ENCODE measurements at regions of chr6 and their contacts with region 1.

Region 1: GRCh38 chr6:111483736-111484632 is 966 bp upstream of the REV3L start:
- DNase-seq: peak; percentile 90
- H3K4me3 ChIP-seq: peak overlapping the region; percentile 90
- H3K27ac ChIP-seq: peak overlapping the region; percentile 91
- H3K4me1 ChIP-seq: peaks cover 46% of the 10 kb centered on the region
- CTCF ChIP-seq: no peak

Region 2: DNA sequence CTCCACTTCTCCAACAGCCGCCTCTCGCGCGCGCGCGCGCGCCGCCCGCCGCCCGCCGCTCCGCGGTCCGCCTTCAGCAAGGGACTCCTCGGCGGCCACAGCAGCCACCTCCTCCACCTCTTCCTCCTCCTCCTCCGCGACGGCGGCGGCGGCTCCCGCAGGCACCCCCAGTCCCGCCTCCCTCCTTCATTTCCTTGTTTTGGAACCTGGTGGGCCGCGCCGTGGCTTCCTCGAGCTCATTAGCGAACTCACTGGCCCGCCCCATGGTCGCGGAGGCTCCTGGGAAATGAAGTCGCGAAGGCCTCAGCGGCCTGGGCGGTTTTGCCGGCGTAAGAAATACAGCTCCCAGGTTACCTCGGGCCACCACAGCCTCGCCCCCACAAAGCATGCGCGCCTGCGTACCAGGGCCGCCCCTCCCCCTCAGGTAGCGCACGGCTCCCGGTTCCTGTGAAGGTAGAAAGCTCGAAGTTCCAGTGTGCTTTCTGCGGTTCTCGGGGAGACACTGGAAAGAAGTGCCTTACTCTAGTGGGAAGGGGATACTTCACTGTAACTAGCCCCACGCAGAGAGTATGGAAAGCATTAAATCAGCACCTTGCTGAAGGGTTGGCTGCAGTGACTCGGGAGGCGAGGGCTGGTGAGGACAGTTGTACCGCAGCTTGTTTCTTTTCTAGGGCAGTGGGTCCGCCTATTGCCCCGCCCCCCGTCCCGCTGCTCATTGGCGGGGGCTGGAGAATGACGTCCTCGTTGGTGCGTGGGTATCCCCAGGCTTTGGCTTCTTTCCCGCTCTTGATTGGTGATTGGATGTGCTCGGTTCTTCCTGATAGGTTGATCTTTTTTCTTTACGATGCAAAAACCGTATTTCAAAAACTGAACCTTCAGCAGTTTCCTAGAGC is 668.5 kb before region 1 on chr6 and contains the start of gene CDK19:
- CTCF ChIA-PET with region 1: no interaction called
- POLR2A ChIA-PET with region 1: no interaction called
- intact Hi-C with region 1: loop called (anchors 10 kb)
- DNase-seq: peak; percentile 99
- H3K4me3 ChIP-seq: peak within 1 kb of the TSS; percentile 78
- H3K27ac ChIP-seq: peak within 1 kb of the TSS; percentile 87
- H3K4me1 ChIP-seq: peaks cover 41% of the 10 kb centered on the region
- CTCF ChIP-seq: no peak
- total RNA-seq, gene CDK19: 15.4 and 16.3 TPM in 2 replicates

Region 3: GRCh38 chr6:111259089-111259831 is 224.7 kb before region 1 on chr6:
- CTCF ChIA-PET with region 1: interaction called, 28 read pairs
- POLR2A ChIA-PET with region 1: interaction called, 21 read pairs
- intact Hi-C with region 1: loop called (anchors 1 kb)
- DNase-seq: peak; percentile 100
- H3K4me3 ChIP-seq: peak overlapping the region; percentile 81
- H3K27ac ChIP-seq: peak overlapping the region; percentile 67
- H3K4me1 ChIP-seq: peaks cover 17% of the 10 kb centered on the region
- CTCF ChIP-seq: peak; percentile 92

Region 4: GRCh38 chr6:111418971-111419693 is 64.9 kb before region 1 on chr6:
- CTCF ChIA-PET with region 1: no interaction called
- POLR2A ChIA-PET with region 1: no interaction called
- intact Hi-C with region 1: no loop called
- DNase-seq: no peak
- H3K4me3 ChIP-seq: no peak overlapping the region
- H3K27ac ChIP-seq: no peak overlapping the region
- H3K4me1 ChIP-seq: peaks cover 14% of the 10 kb centered on the region
- CTCF ChIP-seq: no peak

Region 5: GRCh38 chr6:111573892-111574797 is 90.2 kb after region 1 on chr6:
- CTCF ChIA-PET with region 1: interaction called, 11 read pairs
- POLR2A ChIA-PET with region 1: no interaction called
- intact Hi-C with region 1: no loop called
- DNase-seq: no peak
- H3K4me3 ChIP-seq: no peak overlapping the region
- H3K27ac ChIP-seq: no peak overlapping the region
- H3K4me1 ChIP-seq: peaks cover 8% of the 10 kb centered on the region
- CTCF ChIP-seq: no peak

Region 6: DNA sequence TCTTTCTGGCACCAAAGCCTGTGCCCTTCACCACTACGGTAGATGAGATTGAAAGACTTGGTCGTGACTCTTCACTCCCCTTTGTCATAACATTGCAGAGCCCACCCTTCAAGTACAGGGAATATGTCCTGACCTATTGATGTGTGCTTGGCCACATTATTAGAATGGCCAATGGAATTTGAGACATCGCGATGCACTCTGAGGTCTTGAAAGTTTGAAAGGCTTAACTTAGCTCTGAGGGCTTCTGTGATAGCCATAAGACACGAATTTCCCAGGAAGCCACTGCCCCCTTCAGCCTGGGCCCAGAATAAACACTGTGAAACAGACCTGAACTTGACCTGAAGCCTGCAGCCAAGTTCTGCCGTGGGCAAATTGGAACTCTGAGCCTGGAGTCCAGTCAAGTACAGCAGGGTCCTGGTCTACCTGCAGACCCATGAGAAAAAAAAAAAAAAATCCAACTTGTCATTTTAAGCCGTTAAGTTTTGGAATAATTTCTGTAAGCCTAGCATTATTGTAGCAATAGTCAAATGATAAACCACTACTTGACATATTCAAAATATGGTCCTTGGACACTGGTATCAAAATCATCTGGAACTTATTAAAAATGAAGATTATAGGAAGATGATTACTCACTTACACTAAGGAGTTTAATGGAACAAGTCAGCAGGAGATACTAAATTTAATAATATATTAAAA is 158.6 kb after region 1 on chr6:
- CTCF ChIA-PET with region 1: no interaction called
- POLR2A ChIA-PET with region 1: interaction called, 3 read pairs
- intact Hi-C with region 1: loop called (anchors 10 kb)
- DNase-seq: peak; percentile 51
- H3K4me3 ChIP-seq: no peak overlapping the region
- H3K27ac ChIP-seq: no peak overlapping the region
- H3K4me1 ChIP-seq: no peaks in the 10 kb centered on the region
- CTCF ChIP-seq: peak; percentile 76

Region 7: DNA sequence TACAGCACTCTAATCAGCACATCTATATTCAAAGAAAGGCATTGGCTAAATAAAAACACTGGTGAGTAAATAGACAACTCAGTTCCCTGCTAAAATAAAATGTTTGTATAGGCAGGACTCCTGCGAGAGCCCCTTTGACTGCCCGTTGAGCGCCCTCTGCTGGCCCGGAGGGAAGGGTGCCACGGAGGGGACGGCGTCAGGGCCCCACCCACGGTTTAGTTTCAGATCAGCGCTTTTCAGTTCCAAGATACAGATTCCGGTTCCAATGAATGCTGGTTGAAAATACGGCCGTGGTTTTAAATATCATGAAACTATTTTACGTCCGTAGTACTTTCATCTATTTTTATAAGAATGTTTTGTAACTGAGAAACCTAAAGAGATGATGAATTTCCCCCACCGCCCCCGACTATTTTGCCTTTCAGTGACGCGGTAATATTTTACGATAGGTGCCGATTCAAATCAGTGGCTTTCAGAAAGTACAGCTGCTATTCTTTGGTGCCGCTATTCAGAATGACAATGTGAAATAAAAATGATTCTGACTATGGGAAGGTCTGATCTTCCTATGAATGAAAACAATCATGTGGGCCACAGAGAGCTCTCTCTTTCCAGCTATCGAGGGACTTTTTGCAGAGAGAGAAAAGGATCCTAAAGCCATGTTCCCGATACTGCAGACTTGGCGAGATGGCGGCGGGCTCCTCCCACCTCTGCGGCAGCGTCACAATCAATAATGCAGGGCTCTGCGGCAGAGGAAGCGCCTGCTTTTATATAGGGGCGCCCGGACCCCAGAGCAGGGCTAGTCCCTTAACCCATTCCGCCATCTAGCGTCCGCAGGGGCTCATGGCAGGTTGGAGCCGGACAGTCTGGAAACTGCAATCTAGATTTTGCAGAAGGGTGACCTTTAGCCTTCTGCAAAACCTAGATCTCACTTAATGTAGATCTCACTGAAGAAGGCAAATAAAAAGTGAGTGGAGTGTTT is 559.3 kb after region 1 on chr6:
- CTCF ChIA-PET with region 1: interaction called, 10 read pairs
- POLR2A ChIA-PET with region 1: no interaction called
- intact Hi-C with region 1: loop called (anchors 5 kb)
- DNase-seq: peak; percentile 94
- H3K4me3 ChIP-seq: peak overlapping the region; percentile 70
- H3K27ac ChIP-seq: peak overlapping the region; percentile 75
- H3K4me1 ChIP-seq: peaks cover 6% of the 10 kb centered on the region
- CTCF ChIP-seq: peak; percentile 97